CD8-positive, alpha-beta T cell (primary cell): ENCODE measurements at regions of chr12 and their contacts with region 1.

Region 1: DNA sequence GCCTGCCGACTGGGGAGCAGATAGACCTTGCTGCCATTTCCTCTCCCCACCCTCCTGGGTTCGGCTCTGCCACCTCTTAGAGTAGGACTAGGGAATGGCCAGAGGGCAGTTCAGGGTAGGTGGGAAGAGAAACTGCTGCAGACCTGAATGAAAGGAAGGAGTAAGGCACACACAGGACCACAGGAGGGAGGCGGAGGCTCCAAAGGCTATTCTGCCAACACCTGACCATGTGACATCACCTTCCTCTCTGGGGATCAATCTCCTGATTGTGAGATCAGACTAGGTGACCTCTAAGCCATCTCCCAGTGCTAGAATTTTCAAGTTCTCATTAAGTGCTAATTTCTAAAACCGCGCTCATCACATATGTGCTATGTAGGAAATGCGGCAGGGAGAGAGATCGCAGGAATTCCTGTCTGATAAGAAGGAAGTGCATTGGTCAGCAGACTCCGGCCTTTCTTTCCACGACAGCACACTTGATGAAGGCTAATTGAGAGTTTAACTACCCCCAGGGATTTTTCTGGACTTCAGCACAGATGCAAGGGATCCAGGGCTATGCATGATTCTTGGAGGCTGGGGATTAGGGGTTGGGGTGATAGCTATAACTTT is 11.5 kb upstream of the TSPAN11 start:
- DNase-seq: no peak
- ATAC-seq: no peak
- H3K4me3 ChIP-seq: no peak overlapping the region
- H3K4me3 Mint-ChIP-seq: no peak overlapping the region
- H3K27ac ChIP-seq: no peak overlapping the region
- H3K27ac Mint-ChIP-seq: no peak overlapping the region
- H3K4me1 ChIP-seq: no peaks in the 10 kb centered on the region
- H3K4me1 Mint-ChIP-seq: no peaks in the 10 kb centered on the region
- H3K27me3 ChIP-seq: no peaks in the 10 kb centered on the region
- H3K27me3 Mint-ChIP-seq: peaks cover 6% of the 10 kb centered on the region
- CTCF ChIP-seq: no peak

Region 2: DNA sequence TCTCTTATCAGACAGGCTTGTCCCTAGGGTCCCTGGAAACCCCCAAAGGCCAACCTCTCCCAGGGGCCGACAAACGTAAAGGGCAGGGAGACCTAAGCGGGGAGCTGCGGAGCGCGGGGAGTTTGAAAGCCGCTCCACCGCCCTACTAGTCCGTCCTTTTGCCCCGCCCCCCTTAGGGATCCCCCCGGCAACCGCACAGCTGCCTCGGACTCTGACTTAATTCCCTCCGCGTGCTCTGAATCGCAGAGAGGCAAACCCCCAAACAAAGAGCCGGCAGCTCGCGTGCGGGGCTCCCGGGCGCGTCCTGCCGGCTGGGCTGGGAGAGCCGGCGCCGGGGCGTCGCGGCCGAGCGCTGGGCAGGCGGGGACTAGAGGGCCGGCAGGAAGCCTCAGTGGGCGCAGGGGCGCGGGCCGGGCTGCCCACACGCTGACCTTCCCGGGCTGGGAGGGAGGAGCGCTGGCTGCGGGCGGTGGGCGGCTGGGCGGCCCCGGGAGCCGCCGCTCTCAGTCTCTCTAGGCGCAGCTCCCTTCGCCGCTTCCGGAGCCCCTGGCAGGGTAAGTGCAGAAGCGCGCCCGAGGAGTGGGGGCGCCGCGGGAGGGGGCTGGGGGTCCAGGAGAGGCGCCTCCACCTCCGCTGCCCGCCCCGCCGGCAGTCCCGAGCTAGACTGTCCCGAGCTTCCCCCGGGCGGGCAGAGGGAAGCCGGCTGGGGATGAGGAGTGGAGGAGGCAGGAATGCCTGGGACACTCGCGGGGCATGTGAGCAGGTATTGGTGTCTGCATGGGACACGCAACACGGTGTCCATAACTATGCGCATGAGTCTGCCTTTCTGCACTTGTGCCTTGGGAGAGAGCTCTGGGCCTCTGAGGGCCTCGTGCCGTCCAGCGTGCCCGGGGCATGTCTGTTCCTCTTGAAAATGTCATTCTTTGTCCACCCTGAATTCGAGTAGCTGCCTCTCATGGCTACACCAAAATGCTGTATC is 11.4 kb after region 1 on chr12 and contains the start of gene TSPAN11:
- CTCF ChIA-PET with region 1: no interaction called
- POLR2A ChIA-PET with region 1: no interaction called
- intact Hi-C with region 1: loop called in 1 of 2 experiments (anchors 1 kb)
- DNase-seq: no peak
- ATAC-seq: no peak
- H3K4me3 ChIP-seq: no peak within 1 kb of the TSS
- H3K4me3 Mint-ChIP-seq: no peak within 1 kb of the TSS
- H3K27ac ChIP-seq: no peak within 1 kb of the TSS
- H3K27ac Mint-ChIP-seq: no peak within 1 kb of the TSS
- H3K4me1 ChIP-seq: no peaks in the 10 kb centered on the region
- H3K4me1 Mint-ChIP-seq: no peaks in the 10 kb centered on the region
- H3K27me3 ChIP-seq: peaks cover 0 to 5% of the 10 kb centered on the region in 2 experiments
- H3K27me3 Mint-ChIP-seq: peaks cover 54% of the 10 kb centered on the region
- CTCF ChIP-seq: no peak
- total RNA-seq, gene TSPAN11: not detected